Prostate gland (tissue), 2 donors: ENCODE measurements at regions of chr17 and their contacts with region 1.

Region 1: GRCh38 chr17:56319517-56319916 is 166.2 kb downstream of the ANKFN1 start:
- DNase-seq: peak; percentile 10
- H3K4me3 ChIP-seq: no peak overlapping the region
- H3K27ac ChIP-seq: no peak overlapping the region
- H3K4me1 ChIP-seq: no peaks in the 10 kb centered on the region
- H3K27me3 ChIP-seq: no peaks in the 10 kb centered on the region
- CTCF ChIP-seq: peak in 3 of 4 experiments; percentile 59 to 71 (median 68)
- POLR2A ChIP-seq: no peak

Region 2: DNA sequence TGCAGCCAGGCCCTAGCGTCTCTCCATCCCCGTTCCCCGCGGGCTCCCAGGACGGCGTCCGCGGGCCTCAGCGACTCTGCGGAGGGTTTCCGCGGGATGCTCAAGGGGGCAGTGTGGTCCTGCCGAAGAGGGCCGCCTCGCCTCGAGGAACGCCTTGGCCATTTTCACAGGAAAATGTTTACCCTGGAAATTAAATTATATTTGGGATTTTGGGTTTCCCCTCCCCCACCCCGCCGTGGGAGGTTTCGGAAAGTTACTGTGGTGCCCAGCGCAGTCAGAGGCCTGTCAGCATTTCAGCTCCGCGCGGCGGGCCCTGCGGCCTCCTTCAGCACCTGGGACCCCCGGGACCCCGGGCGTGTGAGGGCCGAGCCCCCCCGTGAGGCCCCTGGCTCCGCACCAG is 474.1 kb before region 1 on chr17:
- intact Hi-C with region 1: loop called (anchors 10 kb)
- DNase-seq: peak; percentile 20
- H3K4me3 ChIP-seq: no peak overlapping the region
- H3K27ac ChIP-seq: no peak overlapping the region
- H3K4me1 ChIP-seq: no peaks in the 10 kb centered on the region
- H3K27me3 ChIP-seq: no peaks in the 10 kb centered on the region
- CTCF ChIP-seq: peak in 3 of 4 experiments; percentile 38 to 60 (median 50)
- POLR2A ChIP-seq: no peak

Region 3: GRCh38 chr17:56085588-56086267 is 233.8 kb before region 1 on chr17:
- intact Hi-C with region 1: no loop called
- DNase-seq: no peak
- H3K4me3 ChIP-seq: no peak overlapping the region
- H3K27ac ChIP-seq: no peak overlapping the region
- H3K4me1 ChIP-seq: no peaks in the 10 kb centered on the region
- H3K27me3 ChIP-seq: no peaks in the 10 kb centered on the region
- CTCF ChIP-seq: no peak
- POLR2A ChIP-seq: no peak

Region 4: GRCh38 chr17:56125830-56126819 is 193.4 kb before region 1 on chr17:
- intact Hi-C with region 1: loop called (anchors 5 kb)
- DNase-seq: peak; percentile 79
- H3K4me3 ChIP-seq: no peak overlapping the region
- H3K27ac ChIP-seq: peak overlapping the region; percentile 20 to 53
- H3K4me1 ChIP-seq: no peaks in the 10 kb centered on the region
- H3K27me3 ChIP-seq: no peaks in the 10 kb centered on the region
- CTCF ChIP-seq: peak in 3 of 4 experiments; percentile 30 to 57 (median 46)
- POLR2A ChIP-seq: no peak

Region 5: DNA sequence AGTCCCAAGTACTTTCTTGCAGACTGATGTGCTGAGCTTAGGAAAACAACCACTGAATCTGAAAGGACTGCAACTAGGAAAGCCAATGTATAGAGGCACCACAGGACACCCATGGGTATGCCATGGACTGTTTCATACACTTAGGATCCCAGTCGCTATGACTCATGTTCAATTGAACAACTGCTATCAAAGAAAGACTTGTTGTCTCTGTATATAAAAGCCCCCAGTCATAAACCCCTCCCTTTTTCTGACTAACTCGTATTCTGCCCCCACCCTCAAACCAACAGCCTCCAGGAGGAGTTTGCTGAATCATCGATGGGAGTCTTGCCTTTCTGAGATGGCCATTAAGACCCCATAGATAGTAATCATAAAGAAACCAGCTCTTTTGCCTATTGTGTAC is 39.1 kb after region 1 on chr17:
- intact Hi-C with region 1: no loop called
- DNase-seq: no peak
- H3K4me3 ChIP-seq: no peak overlapping the region
- H3K27ac ChIP-seq: no peak overlapping the region
- H3K4me1 ChIP-seq: no peaks in the 10 kb centered on the region
- H3K27me3 ChIP-seq: peaks cover 2% of the 10 kb centered on the region
- CTCF ChIP-seq: no peak
- POLR2A ChIP-seq: no peak